SK-N-SH (cell line): ENCODE measurements at regions of chr15 and their contacts with region 1.

Region 1: GRCh38 chr15:76057332-76058000 is 2.3 kb upstream of the TMEM266 start:
- DNase-seq: peak; percentile 59
- H3K4me3 ChIP-seq: peak overlapping the region in 1 of 2 experiments; percentile 55; a peak in 1 of 4 replicates
- H3K27ac ChIP-seq: no peak overlapping the region
- H3K4me1 ChIP-seq: peaks cover 5 to 11% of the 10 kb centered on the region in 2 experiments; a peak in 3 of 4 replicates
- H3K27me3 ChIP-seq: peaks cover 31% of the 10 kb centered on the region
- CTCF ChIP-seq: peak; percentile 81
- EP300 ChIP-seq: no peak
- RAD21 ChIP-seq: peak; percentile 68

Region 2: DNA sequence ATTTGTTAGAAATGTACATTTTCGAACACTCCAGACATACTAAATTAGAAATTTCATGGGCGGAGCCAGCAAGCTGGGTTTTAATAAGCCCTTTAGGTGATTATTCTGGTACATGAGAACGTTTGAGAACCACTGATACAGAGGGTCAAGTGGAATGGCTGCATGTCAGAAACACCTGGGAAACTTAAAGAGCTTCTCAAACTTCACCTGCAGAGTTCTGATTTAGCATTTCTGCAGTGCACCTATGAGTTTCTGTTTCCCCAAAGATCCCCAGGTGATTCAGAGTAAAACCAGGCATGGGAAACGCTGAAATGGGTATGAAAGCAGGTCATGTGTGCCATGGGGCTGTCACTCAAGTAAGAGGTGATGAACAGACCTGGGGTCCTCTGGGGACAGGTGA is 70.4 kb after region 1 on chr15:
- CTCF ChIA-PET with region 1: interaction called, 322 read pairs
- POLR2A ChIA-PET with region 1: no interaction called
- DNase-seq: no peak
- H3K4me3 ChIP-seq: no peak overlapping the region
- H3K27ac ChIP-seq: no peak overlapping the region
- H3K4me1 ChIP-seq: no peaks in the 10 kb centered on the region
- H3K27me3 ChIP-seq: peaks cover 22% of the 10 kb centered on the region; the same call in 1 of the 2 replicates
- CTCF ChIP-seq: no peak
- EP300 ChIP-seq: no peak
- RAD21 ChIP-seq: no peak

Region 3: GRCh38 chr15:76169013-76169412 is 111.5 kb after region 1 on chr15:
- CTCF ChIA-PET with region 1: no interaction called
- POLR2A ChIA-PET with region 1: no interaction called
- DNase-seq: no peak
- H3K4me3 ChIP-seq: no peak overlapping the region
- H3K27ac ChIP-seq: no peak overlapping the region
- H3K4me1 ChIP-seq: no peaks in the 10 kb centered on the region
- H3K27me3 ChIP-seq: no peaks in the 10 kb centered on the region
- CTCF ChIP-seq: no peak
- EP300 ChIP-seq: no peak
- RAD21 ChIP-seq: no peak

Region 4: GRCh38 chr15:76533060-76533822 is 475.8 kb after region 1 on chr15:
- CTCF ChIA-PET with region 1: no interaction called
- POLR2A ChIA-PET with region 1: no interaction called
- DNase-seq: no peak
- H3K4me3 ChIP-seq: no peak overlapping the region
- H3K27ac ChIP-seq: no peak overlapping the region
- H3K4me1 ChIP-seq: peaks cover 0 to 5% of the 10 kb centered on the region in 2 experiments; a peak in 2 of 4 replicates
- H3K27me3 ChIP-seq: no peaks in the 10 kb centered on the region
- CTCF ChIP-seq: no peak
- EP300 ChIP-seq: no peak
- RAD21 ChIP-seq: no peak